ENCODE measurements at regions of chr16 and their contacts with region 1.

Region 1: GRCh38 chr16:68328151-68328859 is 17.5 kb downstream of the PRMT7 start:
- DNase-seq: peak; percentile 76
- H3K4me3 ChIP-seq: no peak overlapping the region
- H3K27ac ChIP-seq: no peak overlapping the region
- H3K4me1 ChIP-seq: no peaks in the 10 kb centered on the region
- H3K27me3 ChIP-seq: no peaks in the 10 kb centered on the region
- CTCF ChIP-seq: peak; percentile 79 to 96 (median 90)
- POLR2A ChIP-seq: no peak

Region 2: GRCh38 chr16:68244903-68245853 is 83.1 kb before region 1 on chr16 and contains the start of gene PLA2G15:
- intact Hi-C with region 1: loop called (anchors 5 kb)
- DNase-seq: peak; percentile 95
- H3K4me3 ChIP-seq: peak within 1 kb of the TSS; percentile 75 to 83
- H3K27ac ChIP-seq: peak within 1 kb of the TSS; percentile 38 to 47
- H3K4me1 ChIP-seq: peaks cover 6% of the 10 kb centered on the region
- H3K27me3 ChIP-seq: no peaks in the 10 kb centered on the region
- CTCF ChIP-seq: peak in 1 of 4 experiments; percentile 7
- POLR2A ChIP-seq: peak; percentile 78
- total RNA-seq, gene PLA2G15: 15.7 to 39.5 TPM

Measured in prostate gland (tissue), 2 donors.